ENCODE measurements at regions of chrX and their contacts with region 1.

Region 1: GRCh38 chrX:34749896-34750295 is 92.8 kb upstream of the TMEM47 start:
- DNase-seq: no peak
- ATAC-seq: no peak
- H3K4me3 Mint-ChIP-seq: no peak overlapping the region
- H3K27ac Mint-ChIP-seq: no peak overlapping the region
- H3K4me1 Mint-ChIP-seq: no peaks in the 10 kb centered on the region
- H3K27me3 Mint-ChIP-seq: no peaks in the 10 kb centered on the region

Region 2: GRCh38 chrX:34656842-34657725 is 92.8 kb before region 1 on chrX and contains the start of gene TMEM47:
- CTCF ChIA-PET with region 1: no interaction called
- POLR2A ChIA-PET with region 1: no interaction called
- intact Hi-C with region 1: no loop called
- DNase-seq: peak; percentile 13
- ATAC-seq: peak; percentile 58
- H3K4me3 Mint-ChIP-seq: peak within 1 kb of the TSS; percentile 8
- H3K27ac Mint-ChIP-seq: no peak within 1 kb of the TSS
- H3K4me1 Mint-ChIP-seq: peaks cover 7% of the 10 kb centered on the region
- H3K27me3 Mint-ChIP-seq: peaks cover 24% of the 10 kb centered on the region
- total RNA-seq, gene TMEM47: not detected

Region 3: GRCh38 chrX:35166023-35166422 is 416.1 kb after region 1 on chrX:
- CTCF ChIA-PET with region 1: no interaction called
- POLR2A ChIA-PET with region 1: no interaction called
- intact Hi-C with region 1: loop called in 1 of 2 experiments (anchors 5 kb)
- DNase-seq: no peak
- ATAC-seq: no peak
- H3K4me3 Mint-ChIP-seq: no peak overlapping the region
- H3K27ac Mint-ChIP-seq: no peak overlapping the region
- H3K4me1 Mint-ChIP-seq: no peaks in the 10 kb centered on the region
- H3K27me3 Mint-ChIP-seq: no peaks in the 10 kb centered on the region